Activated CD4-positive, alpha-beta T cell treated with anti-CD3 and anti-CD28 coated beads for 36 hours (primary cell): ENCODE measurements at regions of chr3 and their contacts with region 1.

Region 1: DNA sequence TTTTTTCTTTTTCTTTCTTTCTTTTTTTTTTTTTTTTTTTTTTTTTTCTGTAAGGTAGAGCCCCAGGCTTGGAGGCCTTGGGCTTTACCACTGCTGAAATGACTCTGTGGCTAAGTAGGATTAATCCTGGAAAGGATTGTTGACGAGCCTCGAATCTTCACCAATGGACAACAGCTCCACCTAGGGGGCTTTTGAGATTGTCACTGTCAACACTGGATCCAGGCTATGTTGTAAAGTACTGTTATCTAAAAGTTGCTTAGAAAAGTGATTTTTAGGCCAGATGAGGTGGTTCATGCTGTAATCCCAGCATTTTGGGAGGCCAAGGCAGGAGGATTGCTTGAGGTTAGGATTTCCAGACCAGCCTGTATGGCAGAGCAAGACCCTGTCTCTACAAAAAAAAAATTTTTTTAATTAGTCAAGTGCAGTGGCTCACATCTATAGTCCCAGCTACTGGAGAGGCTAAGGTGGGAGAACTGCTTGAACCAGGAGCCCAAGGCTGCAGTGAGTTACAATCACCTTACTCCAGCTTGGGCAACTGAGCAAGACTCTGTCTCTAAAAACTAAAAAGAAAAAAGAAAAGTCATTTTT is 41.6 kb downstream of the KLHL18 start:
- DNase-seq: peak; percentile 66
- ATAC-seq: peak; percentile 88
- H3K4me3 Mint-ChIP-seq: no peak overlapping the region
- H3K27ac Mint-ChIP-seq: no peak overlapping the region
- H3K4me1 Mint-ChIP-seq: no peaks in the 10 kb centered on the region
- H3K27me3 Mint-ChIP-seq: no peaks in the 10 kb centered on the region

Region 2: DNA sequence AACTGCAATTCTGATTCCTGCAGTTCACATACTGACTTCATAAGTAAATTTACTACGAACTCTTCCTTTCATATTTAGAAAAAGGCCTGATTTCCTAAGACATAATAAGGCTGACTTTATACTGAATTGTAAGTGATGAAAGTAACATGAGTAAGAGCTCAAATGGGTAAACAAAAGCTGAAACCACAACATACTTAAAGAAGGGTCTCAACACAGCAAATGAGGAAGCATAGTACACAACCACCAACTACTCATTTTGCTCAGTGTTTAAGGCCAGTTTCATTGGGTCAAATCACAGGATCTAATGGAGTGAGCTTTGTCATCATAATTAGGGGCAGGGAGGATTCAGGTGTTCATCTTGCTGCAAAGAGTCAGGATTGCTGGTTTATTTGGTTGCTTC is 241.9 kb before region 1 on chr3:
- CTCF ChIA-PET with region 1: interaction called, 5 read pairs
- POLR2A ChIA-PET with region 1: interaction called, 4 read pairs
- intact Hi-C with region 1: loop called in 1 of 2 experiments (anchors 10 kb)
- DNase-seq: no peak
- ATAC-seq: no peak
- H3K4me3 Mint-ChIP-seq: no peak overlapping the region
- H3K27ac Mint-ChIP-seq: no peak overlapping the region
- H3K4me1 Mint-ChIP-seq: peaks cover 18% of the 10 kb centered on the region
- H3K27me3 Mint-ChIP-seq: no peaks in the 10 kb centered on the region

Region 3: DNA sequence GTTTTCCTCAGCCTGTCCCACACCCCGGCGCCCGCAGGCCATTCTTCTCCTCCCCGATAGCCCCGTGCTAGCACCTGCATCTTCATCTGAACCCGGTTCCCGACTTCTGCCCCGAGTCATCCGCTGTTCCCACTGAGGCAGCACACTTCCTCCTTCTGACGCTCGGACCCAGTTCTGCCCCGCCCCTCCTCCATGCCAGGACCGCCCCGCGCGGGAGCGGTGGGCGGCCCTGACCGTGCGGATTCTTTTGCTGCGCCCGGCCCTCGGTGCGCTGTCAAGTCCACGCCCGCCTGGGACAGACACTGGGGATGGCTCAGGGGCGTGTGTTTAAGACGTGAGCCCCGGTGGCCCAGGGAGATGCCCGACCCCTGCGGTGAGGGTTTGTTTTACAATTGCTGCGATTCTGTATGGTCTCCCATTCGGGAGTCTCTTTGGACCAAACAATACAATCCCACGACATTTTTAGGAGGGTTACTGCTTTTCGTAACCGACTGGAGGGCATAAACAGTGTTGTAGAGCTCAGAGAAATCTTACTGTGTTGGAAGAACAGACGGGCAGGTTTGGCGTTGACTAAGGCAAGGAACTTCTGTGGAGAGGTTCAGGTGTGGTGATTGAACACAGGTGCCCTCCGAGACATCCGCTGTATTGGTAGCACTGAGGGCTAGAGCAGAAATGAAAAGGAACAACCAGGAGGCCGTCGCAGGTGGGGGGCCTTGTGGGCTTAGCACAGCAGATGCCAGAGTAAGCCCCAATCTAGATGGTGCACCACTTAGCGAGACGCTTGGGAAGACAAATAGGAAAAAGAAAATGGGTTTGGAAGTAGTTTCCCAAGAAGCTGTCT is 57.2 kb after region 1 on chr3:
- CTCF ChIA-PET with region 1: no interaction called
- POLR2A ChIA-PET with region 1: no interaction called
- intact Hi-C with region 1: no loop called
- DNase-seq: peak; percentile 88
- ATAC-seq: peak; percentile 59
- H3K4me3 Mint-ChIP-seq: peak overlapping the region; percentile 86
- H3K27ac Mint-ChIP-seq: peak overlapping the region; percentile 99
- H3K4me1 Mint-ChIP-seq: peaks cover 43% of the 10 kb centered on the region
- H3K27me3 Mint-ChIP-seq: no peaks in the 10 kb centered on the region